Left ventricle myocardium superior (tissue), 1 donor: ENCODE measurements at regions of chr4 and their contacts with region 1.

Region 1: GRCh38 chr4:58093352-58093751 is 983.2 kb upstream of the IGFBP7 start:
- DNase-seq: no peak
- ATAC-seq: no peak

Region 2: DNA sequence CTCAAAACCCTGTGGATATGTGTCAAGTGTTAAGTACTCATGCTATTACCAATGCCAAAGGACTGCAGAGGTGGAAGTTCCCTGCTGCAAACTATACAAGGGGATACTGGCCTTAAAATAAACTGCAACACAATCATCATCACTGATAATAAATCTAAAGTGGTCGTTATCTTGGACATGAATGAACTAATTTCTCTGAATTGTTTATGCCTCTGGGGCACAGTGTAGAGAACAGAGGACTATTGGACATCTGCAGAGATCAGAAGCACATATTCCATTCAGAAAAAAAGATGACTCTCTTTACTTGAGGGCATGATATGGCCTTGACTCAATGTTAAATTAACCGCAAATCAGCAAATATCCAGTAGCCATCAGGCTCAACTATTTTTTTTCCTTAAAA is 440.6 kb before region 1 on chr4:
- intact Hi-C with region 1: loop called (anchors 10 kb)
- DNase-seq: no peak
- ATAC-seq: no peak